ENCODE measurements at regions of chr10 and their contacts with region 1.

Region 1: GRCh38 chr10:30671026-30671616 is 41.6 kb upstream of the LYZL2 start:
- DNase-seq: peak; percentile 44

Region 2: DNA sequence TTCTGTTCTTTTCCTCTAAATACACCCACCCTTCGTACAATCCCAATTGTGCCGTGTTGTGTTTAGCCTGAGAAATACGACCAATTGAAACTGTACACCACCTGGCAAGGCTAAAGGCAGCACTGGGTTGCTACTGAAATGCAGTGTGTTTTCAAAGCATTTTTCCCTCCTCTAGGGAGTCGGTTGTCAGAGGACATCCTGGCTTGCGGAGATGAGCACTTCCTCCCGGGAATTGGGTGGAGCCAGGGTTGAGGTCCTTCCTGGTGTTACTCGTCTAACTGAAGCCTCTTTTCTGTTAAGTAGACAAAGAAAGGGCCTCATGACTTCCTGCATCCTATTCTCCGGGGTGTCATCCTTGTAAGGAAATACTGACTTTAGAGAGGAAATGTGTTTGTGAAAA is 455.5 kb before region 1 on chr10:
- CTCF ChIA-PET with region 1: no interaction called
- POLR2A ChIA-PET with region 1: no interaction called
- DNase-seq: no peak

Region 3: DNA sequence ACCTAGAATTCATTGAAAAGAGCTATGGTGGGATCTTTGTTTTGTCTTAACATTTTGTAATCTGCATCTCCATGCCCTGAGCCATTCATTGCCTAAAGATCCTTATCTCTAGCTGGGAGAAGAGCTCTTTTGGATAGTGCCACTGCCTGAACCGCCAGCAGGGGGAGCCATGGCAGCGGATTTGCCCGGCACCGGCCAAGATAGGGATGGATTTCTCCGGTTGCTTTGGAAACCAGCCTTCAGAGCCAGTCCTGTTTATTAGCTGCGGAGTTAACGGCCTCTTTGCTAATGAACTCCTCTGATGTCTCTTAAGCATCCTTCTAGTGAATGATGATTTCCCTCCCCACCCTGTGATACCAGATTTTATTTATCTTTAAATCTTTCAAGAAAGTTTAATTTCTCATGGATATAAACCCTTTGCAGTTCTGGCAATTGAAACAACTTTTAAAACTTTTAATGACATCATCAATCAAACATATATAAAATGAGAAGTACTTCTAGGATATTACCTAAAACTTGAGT is 16.6 kb after region 1 on chr10:
- CTCF ChIA-PET with region 1: interaction called, 11 read pairs
- POLR2A ChIA-PET with region 1: no interaction called
- DNase-seq: peak; percentile 62

Region 4: DNA sequence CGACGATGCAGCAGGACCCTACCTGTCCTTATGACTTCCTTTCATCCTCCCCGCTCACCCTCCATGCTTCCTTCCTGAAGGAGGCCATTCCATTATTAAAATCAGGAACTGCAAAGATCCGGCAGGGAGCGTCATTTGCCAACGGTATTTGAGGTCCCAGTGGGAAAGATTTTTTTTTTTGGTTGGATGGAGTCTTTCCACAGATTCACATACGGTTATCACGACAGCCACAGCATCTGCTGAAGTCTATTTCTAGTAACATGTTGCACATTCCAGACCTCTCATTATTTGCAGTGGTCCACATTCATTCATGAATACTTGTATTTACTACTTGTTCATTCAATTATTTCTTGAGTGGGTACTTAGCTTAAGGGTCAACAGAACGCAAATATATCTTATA is 53.2 kb after region 1 on chr10:
- CTCF ChIA-PET with region 1: no interaction called
- POLR2A ChIA-PET with region 1: no interaction called
- DNase-seq: no peak